ENCODE measurements at regions of chr9 and their contacts with region 1.

Region 1: GRCh38 chr9:34376596-34377403 is at the start of gene MYORG:
- DNase-seq: peak; percentile 93 to 98 (median 95)
- ATAC-seq: peak; percentile 73
- H3K4me3 ChIP-seq: peak within 1 kb of the TSS; percentile 77 to 82
- H3K4me3 Mint-ChIP-seq: peak within 1 kb of the TSS; percentile 93
- H3K27ac ChIP-seq: peak within 1 kb of the TSS; percentile 9 to 55
- H3K27ac Mint-ChIP-seq: peak within 1 kb of the TSS; percentile 89
- H3K4me1 ChIP-seq: peaks cover 36% of the 10 kb centered on the region
- H3K4me1 Mint-ChIP-seq: peaks cover 47% of the 10 kb centered on the region
- H3K27me3 ChIP-seq: no peaks in the 10 kb centered on the region
- H3K27me3 Mint-ChIP-seq: no peaks in the 10 kb centered on the region
- CTCF ChIP-seq: no peak
- total RNA-seq, gene MYORG: 0.39 to 0.60 TPM

Region 2: GRCh38 chr9:33473643-33474352 is 903.0 kb before region 1 on chr9 and contains the start of gene NOL6:
- CTCF ChIA-PET with region 1: no interaction called
- POLR2A ChIA-PET with region 1: no interaction called
- intact Hi-C with region 1: loop called in 1 of 2 experiments (anchors 5 kb)
- DNase-seq: peak; percentile 97 to 99 (median 98)
- ATAC-seq: peak; percentile 99
- H3K4me3 ChIP-seq: peak within 1 kb of the TSS; percentile 91 to 94
- H3K4me3 Mint-ChIP-seq: peak within 1 kb of the TSS; percentile 99
- H3K27ac ChIP-seq: peak within 1 kb of the TSS; percentile 76 to 80
- H3K27ac Mint-ChIP-seq: peak within 1 kb of the TSS; percentile 96
- H3K4me1 ChIP-seq: peaks cover 22% of the 10 kb centered on the region
- H3K4me1 Mint-ChIP-seq: peaks cover 32% of the 10 kb centered on the region
- H3K27me3 ChIP-seq: no peaks in the 10 kb centered on the region
- H3K27me3 Mint-ChIP-seq: no peaks in the 10 kb centered on the region
- CTCF ChIP-seq: no peak
- total RNA-seq, gene NOL6: 41.8 to 42.3 TPM

Region 3: GRCh38 chr9:34048923-34049697 is 327.7 kb before region 1 on chr9:
- CTCF ChIA-PET with region 1: no interaction called
- POLR2A ChIA-PET with region 1: interaction called, 3 read pairs
- intact Hi-C with region 1: loop called in 1 of 2 experiments (anchors 2 kb)
- DNase-seq: peak; percentile 92 to 99 (median 97)
- ATAC-seq: peak; percentile 81
- H3K4me3 ChIP-seq: peak overlapping the region; percentile 76 to 79
- H3K4me3 Mint-ChIP-seq: peak overlapping the region; percentile 97
- H3K27ac ChIP-seq: peak overlapping the region; percentile 87 to 95
- H3K27ac Mint-ChIP-seq: peak overlapping the region; percentile 100
- H3K4me1 ChIP-seq: peaks cover 23% of the 10 kb centered on the region
- H3K4me1 Mint-ChIP-seq: peaks cover 29% of the 10 kb centered on the region
- H3K27me3 ChIP-seq: no peaks in the 10 kb centered on the region
- H3K27me3 Mint-ChIP-seq: no peaks in the 10 kb centered on the region
- CTCF ChIP-seq: no peak

Region 4: GRCh38 chr9:34084562-34084961 is 292.2 kb before region 1 on chr9:
- CTCF ChIA-PET with region 1: no interaction called
- POLR2A ChIA-PET with region 1: no interaction called
- intact Hi-C with region 1: no loop called
- DNase-seq: no peak
- ATAC-seq: no peak
- H3K4me3 ChIP-seq: no peak overlapping the region
- H3K4me3 Mint-ChIP-seq: no peak overlapping the region
- H3K27ac ChIP-seq: no peak overlapping the region
- H3K27ac Mint-ChIP-seq: peak overlapping the region; percentile 41
- H3K4me1 ChIP-seq: no peaks in the 10 kb centered on the region
- H3K4me1 Mint-ChIP-seq: no peaks in the 10 kb centered on the region
- H3K27me3 ChIP-seq: no peaks in the 10 kb centered on the region
- H3K27me3 Mint-ChIP-seq: no peaks in the 10 kb centered on the region
- CTCF ChIP-seq: no peak

Region 5: GRCh38 chr9:34252670-34253459 is 123.9 kb before region 1 on chr9:
- CTCF ChIA-PET with region 1: interaction called, 34 read pairs
- POLR2A ChIA-PET with region 1: interaction called, 10 read pairs
- intact Hi-C with region 1: loop called (anchors 1 to 2 kb)
- DNase-seq: peak in 8 of 9 experiments; percentile 29 to 79 (median 66)
- ATAC-seq: peak; percentile 75
- H3K4me3 ChIP-seq: no peak overlapping the region
- H3K4me3 Mint-ChIP-seq: no peak overlapping the region
- H3K27ac ChIP-seq: no peak overlapping the region
- H3K27ac Mint-ChIP-seq: peak overlapping the region; percentile 52
- H3K4me1 ChIP-seq: peaks cover 23% of the 10 kb centered on the region
- H3K4me1 Mint-ChIP-seq: peaks cover 21% of the 10 kb centered on the region
- H3K27me3 ChIP-seq: no peaks in the 10 kb centered on the region
- H3K27me3 Mint-ChIP-seq: no peaks in the 10 kb centered on the region
- CTCF ChIP-seq: peak; percentile 92

Region 6: GRCh38 chr9:34522971-34523797 is 146.4 kb after region 1 on chr9 and contains the start of gene ENHO:
- CTCF ChIA-PET with region 1: no interaction called
- POLR2A ChIA-PET with region 1: no interaction called
- intact Hi-C with region 1: loop called in 1 of 2 experiments (anchors 5 kb)
- DNase-seq: peak; percentile 79 to 96 (median 87)
- ATAC-seq: peak; percentile 97
- H3K4me3 ChIP-seq: peak within 1 kb of the TSS; percentile 48 to 70
- H3K4me3 Mint-ChIP-seq: peak within 1 kb of the TSS; percentile 83
- H3K27ac ChIP-seq: peak within 1 kb of the TSS in 1 of 2 experiments; percentile 33
- H3K27ac Mint-ChIP-seq: no peak within 1 kb of the TSS
- H3K4me1 ChIP-seq: peaks cover 9% of the 10 kb centered on the region
- H3K4me1 Mint-ChIP-seq: peaks cover 4% of the 10 kb centered on the region
- H3K27me3 ChIP-seq: no peaks in the 10 kb centered on the region
- H3K27me3 Mint-ChIP-seq: peaks cover 2% of the 10 kb centered on the region
- CTCF ChIP-seq: no peak
- total RNA-seq, gene ENHO: not detected

Region 7: DNA sequence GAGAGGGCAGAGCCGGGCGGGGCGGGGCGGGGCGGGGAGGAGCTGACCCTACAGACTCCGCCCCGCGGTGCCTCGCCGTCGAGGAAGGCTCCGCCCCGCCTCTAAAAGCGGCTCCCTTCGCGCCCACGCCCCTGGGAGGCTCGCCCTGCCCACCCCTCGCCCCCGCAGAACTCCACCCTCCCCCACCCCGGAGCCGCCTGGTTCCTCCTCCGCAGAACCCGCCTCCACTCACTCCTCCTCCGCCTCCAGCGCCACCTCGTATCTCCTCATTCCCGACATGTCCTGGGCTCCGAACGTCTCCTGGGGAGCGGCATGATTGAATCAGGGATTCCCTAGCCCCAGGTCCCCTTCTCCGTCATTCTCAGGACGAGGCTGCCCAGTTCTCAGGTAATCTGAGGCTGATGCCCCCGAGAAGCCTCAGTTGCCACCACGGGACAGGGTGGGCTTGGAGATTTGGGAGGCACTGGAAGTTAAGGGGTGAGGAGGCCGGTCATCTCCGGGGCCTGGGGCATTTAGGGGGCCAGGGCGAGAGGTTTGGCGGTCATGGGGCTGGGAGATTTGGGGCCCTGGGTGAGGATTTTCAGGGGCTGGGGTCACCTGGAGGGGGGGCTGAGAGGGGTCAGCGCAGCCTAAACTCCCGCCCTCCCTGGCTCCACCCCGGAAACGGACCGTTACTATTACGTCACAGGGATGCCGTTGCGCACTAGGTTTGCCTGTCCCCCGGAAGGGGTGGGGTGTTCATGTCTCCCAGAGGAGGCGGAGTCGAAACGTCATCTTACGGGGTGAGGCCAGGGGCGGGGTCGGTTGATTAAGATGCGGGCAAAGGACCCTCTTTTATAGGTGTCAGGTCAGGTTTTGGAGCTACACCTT is 288.8 kb after region 1 on chr9:
- CTCF ChIA-PET with region 1: interaction called, 3 read pairs
- POLR2A ChIA-PET with region 1: interaction called, 3 read pairs
- intact Hi-C with region 1: loop called in 1 of 2 experiments (anchors 2 kb)
- DNase-seq: peak; percentile 75 to 96 (median 89)
- ATAC-seq: peak; percentile 83
- H3K4me3 ChIP-seq: peak overlapping the region; percentile 86 to 93
- H3K4me3 Mint-ChIP-seq: peak overlapping the region; percentile 92
- H3K27ac ChIP-seq: peak overlapping the region; percentile 96 to 99
- H3K27ac Mint-ChIP-seq: peak overlapping the region; percentile 97
- H3K4me1 ChIP-seq: peaks cover 37% of the 10 kb centered on the region
- H3K4me1 Mint-ChIP-seq: peaks cover 36% of the 10 kb centered on the region
- H3K27me3 ChIP-seq: no peaks in the 10 kb centered on the region
- H3K27me3 Mint-ChIP-seq: no peaks in the 10 kb centered on the region
- CTCF ChIP-seq: no peak

Measured in CD8-positive, alpha-beta T cell (primary cell).